Caco-2 (cell line): ENCODE measurements at regions of chr4 and their contacts with region 1.

Region 1: DNA sequence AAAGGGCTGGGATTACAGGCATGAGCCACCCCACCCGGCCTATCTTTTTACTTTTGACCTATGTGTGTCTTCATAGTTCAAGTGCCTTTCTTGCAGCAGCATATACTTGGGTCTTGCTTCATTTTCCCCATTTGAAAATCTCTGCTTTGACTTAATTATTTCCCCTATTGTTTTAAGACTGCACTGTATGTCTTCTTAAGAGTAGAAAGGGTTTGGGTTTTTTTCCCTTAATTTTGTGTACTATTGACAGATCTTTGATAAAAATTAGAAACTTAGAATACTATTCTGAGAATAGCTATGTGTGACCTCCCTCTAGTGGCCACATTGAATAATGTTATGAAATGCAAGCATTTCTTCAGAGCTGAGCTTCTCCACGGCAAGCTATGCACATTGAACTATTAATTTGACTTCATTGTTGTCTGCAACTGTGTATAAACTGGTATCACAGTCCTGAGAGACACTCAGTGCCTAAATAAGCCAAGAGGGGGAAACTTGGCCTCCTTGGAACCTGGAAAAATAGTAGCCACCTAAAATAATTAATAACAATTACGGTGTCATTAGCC is 8.7 kb upstream of the SLC25A4 start:
- DNase-seq: peak in 1 of 2 experiments; percentile 41
- H3K4me3 ChIP-seq: no peak overlapping the region
- H3K4me3 Mint-ChIP-seq: no peak overlapping the region
- H3K27ac Mint-ChIP-seq: no peak overlapping the region
- H3K4me1 ChIP-seq: no peaks in the 10 kb centered on the region
- H3K4me1 Mint-ChIP-seq: no peaks in the 10 kb centered on the region
- H3K27me3 ChIP-seq: no peaks in the 10 kb centered on the region
- H3K27me3 Mint-ChIP-seq: peaks cover 3% of the 10 kb centered on the region
- CTCF ChIP-seq: peak; percentile 43 to 74

Region 2: GRCh38 chr4:185005216-185005819 is 129.1 kb before region 1 on chr4:
- CTCF ChIA-PET with region 1: interaction called, 10 read pairs
- POLR2A ChIA-PET with region 1: no interaction called
- intact Hi-C with region 1: loop called (anchors 1 kb)
- DNase-seq: peak; percentile 74 to 80
- H3K4me3 ChIP-seq: no peak overlapping the region
- H3K4me3 Mint-ChIP-seq: peak overlapping the region; percentile 2
- H3K27ac Mint-ChIP-seq: no peak overlapping the region
- H3K4me1 ChIP-seq: no peaks in the 10 kb centered on the region
- H3K4me1 Mint-ChIP-seq: no peaks in the 10 kb centered on the region
- H3K27me3 ChIP-seq: no peaks in the 10 kb centered on the region; the same call in 1 of the 2 replicates
- H3K27me3 Mint-ChIP-seq: peaks cover 19% of the 10 kb centered on the region
- CTCF ChIP-seq: peak; percentile 81 to 88

Region 3: GRCh38 chr4:185039508-185040273 is 94.7 kb before region 1 on chr4:
- CTCF ChIA-PET with region 1: interaction called, 26 read pairs
- POLR2A ChIA-PET with region 1: no interaction called
- intact Hi-C with region 1: loop called (anchors 1 kb)
- DNase-seq: peak; percentile 41 to 58
- H3K4me3 ChIP-seq: no peak overlapping the region
- H3K4me3 Mint-ChIP-seq: peak overlapping the region; percentile 61
- H3K27ac Mint-ChIP-seq: no peak overlapping the region
- H3K4me1 ChIP-seq: no peaks in the 10 kb centered on the region
- H3K4me1 Mint-ChIP-seq: peaks cover 12% of the 10 kb centered on the region
- H3K27me3 ChIP-seq: no peaks in the 10 kb centered on the region
- H3K27me3 Mint-ChIP-seq: no peaks in the 10 kb centered on the region
- CTCF ChIP-seq: peak; percentile 67

Region 4: GRCh38 chr4:185071236-185071811 is 63.1 kb before region 1 on chr4:
- CTCF ChIA-PET with region 1: no interaction called
- POLR2A ChIA-PET with region 1: no interaction called
- intact Hi-C with region 1: no loop called
- DNase-seq: no peak
- H3K4me3 ChIP-seq: no peak overlapping the region
- H3K4me3 Mint-ChIP-seq: no peak overlapping the region
- H3K27ac Mint-ChIP-seq: no peak overlapping the region
- H3K4me1 ChIP-seq: no peaks in the 10 kb centered on the region
- H3K4me1 Mint-ChIP-seq: no peaks in the 10 kb centered on the region
- H3K27me3 ChIP-seq: no peaks in the 10 kb centered on the region
- H3K27me3 Mint-ChIP-seq: peaks cover 22% of the 10 kb centered on the region
- CTCF ChIP-seq: no peak